Activated CD4-positive, alpha-beta memory T cell treated with anti-CD3 and anti-CD28 coated beads for 36 hours (primary cell): ENCODE measurements at regions of chr6 and their contacts with region 1.

Region 1: DNA sequence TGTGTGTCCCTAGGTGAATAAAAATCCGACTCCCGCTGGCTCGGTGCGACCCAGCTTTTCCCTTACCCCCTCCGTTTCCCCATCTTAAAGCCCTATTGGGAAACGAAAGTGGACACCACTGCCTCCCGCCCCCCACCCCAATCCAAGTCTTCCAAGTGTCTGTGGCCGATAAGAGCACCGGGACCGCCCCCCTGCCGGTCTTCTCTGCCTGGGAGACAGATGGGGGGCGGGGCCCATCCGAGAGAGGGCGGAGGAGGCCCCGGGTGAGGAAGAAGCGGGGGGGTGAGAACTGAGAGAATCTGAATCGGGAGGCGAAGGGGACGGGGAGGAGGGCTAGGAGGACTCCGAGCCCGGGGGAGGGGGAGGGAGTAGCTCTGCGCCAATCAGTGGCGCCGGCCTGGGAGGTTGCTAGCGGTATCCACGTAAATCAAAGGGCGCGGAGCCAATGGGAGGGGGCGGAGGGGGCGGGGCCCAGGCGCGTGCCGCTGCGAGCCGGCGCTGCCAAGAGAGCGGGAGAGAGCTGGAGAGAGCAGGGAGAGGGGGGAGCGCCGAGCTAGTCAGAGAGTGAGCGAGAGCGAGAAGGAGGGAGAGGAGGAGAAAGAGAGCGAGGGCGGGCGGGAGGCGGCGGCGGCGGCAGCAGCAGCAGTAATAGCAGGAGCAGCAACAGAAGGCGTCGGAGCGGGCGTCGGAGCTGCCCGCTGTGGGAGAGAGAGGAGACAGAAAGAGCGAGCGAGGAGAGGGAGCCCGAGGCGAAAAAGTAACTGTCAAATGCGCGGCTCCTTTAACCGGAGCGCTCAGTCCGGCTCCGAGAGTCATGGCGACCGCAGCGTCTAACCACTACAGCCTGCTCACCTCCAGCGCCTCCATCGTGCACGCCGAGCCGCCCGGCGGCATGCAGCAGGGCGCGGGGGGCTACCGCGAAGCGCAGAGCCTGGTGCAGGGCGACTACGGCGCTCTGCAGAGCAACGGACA is at the start of gene POU3F2:
- DNase-seq: peak; percentile 81
- H3K4me3 Mint-ChIP-seq: peak within 1 kb of the TSS; percentile 65
- H3K27ac Mint-ChIP-seq: no peak within 1 kb of the TSS
- H3K4me1 Mint-ChIP-seq: peaks cover 38% of the 10 kb centered on the region
- H3K27me3 Mint-ChIP-seq: peaks cover 68% of the 10 kb centered on the region
- total RNA-seq, gene POU3F2: not detected

Region 2: GRCh38 chr6:97282726-97283617 is 1551.4 kb before region 1 on chr6 and contains the start of gene MMS22L:
- CTCF ChIA-PET with region 1: no interaction called
- POLR2A ChIA-PET with region 1: no interaction called
- intact Hi-C with region 1: loop called (anchors 10 kb)
- DNase-seq: peak; percentile 95
- H3K4me3 Mint-ChIP-seq: peak within 1 kb of the TSS; percentile 91
- H3K27ac Mint-ChIP-seq: peak within 1 kb of the TSS; percentile 69
- H3K4me1 Mint-ChIP-seq: peaks cover 24% of the 10 kb centered on the region
- H3K27me3 Mint-ChIP-seq: no peaks in the 10 kb centered on the region
- total RNA-seq, gene MMS22L: 38.5 to 43.3 TPM

Region 3: DNA sequence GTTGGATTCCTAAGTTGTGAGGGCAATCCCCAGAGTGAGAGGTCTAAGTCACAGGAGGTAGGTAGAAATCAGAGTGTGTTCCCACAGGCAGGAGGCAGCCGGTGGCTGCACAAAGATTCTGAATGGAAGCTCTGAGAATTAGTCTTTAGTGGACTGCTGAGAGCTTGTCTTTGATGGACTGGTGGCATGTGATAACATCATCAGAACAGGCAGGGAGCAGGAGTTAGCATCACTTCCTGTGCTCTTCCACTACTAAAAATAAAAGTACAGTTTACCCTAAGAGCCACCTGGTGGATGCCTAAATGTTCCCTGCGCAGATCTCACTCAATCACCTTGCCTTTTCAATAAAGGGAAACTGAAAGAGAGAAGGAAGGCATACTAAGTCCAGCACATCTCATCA is 294.6 kb before region 1 on chr6:
- CTCF ChIA-PET with region 1: no interaction called
- POLR2A ChIA-PET with region 1: no interaction called
- intact Hi-C with region 1: no loop called
- DNase-seq: no peak
- H3K4me3 Mint-ChIP-seq: no peak overlapping the region
- H3K27ac Mint-ChIP-seq: no peak overlapping the region
- H3K4me1 Mint-ChIP-seq: no peaks in the 10 kb centered on the region
- H3K27me3 Mint-ChIP-seq: no peaks in the 10 kb centered on the region

Region 4: GRCh38 chr6:98777762-98778161 is 56.6 kb before region 1 on chr6:
- CTCF ChIA-PET with region 1: no interaction called
- POLR2A ChIA-PET with region 1: interaction called, 3 read pairs
- intact Hi-C with region 1: loop called (anchors 5 kb)
- DNase-seq: peak; percentile 9
- H3K4me3 Mint-ChIP-seq: no peak overlapping the region
- H3K27ac Mint-ChIP-seq: no peak overlapping the region
- H3K4me1 Mint-ChIP-seq: no peaks in the 10 kb centered on the region
- H3K27me3 Mint-ChIP-seq: peaks cover 19% of the 10 kb centered on the region

Region 5: GRCh38 chr6:98816799-98817198 is 17.5 kb before region 1 on chr6:
- CTCF ChIA-PET with region 1: no interaction called
- POLR2A ChIA-PET with region 1: no interaction called
- intact Hi-C with region 1: no loop called
- DNase-seq: no peak
- H3K4me3 Mint-ChIP-seq: no peak overlapping the region
- H3K27ac Mint-ChIP-seq: no peak overlapping the region
- H3K4me1 Mint-ChIP-seq: no peaks in the 10 kb centered on the region
- H3K27me3 Mint-ChIP-seq: peaks cover 45% of the 10 kb centered on the region

Region 6: GRCh38 chr6:98894810-98895209 is 60.5 kb after region 1 on chr6:
- CTCF ChIA-PET with region 1: no interaction called
- POLR2A ChIA-PET with region 1: no interaction called
- intact Hi-C with region 1: no loop called
- DNase-seq: no peak
- H3K4me3 Mint-ChIP-seq: no peak overlapping the region
- H3K27ac Mint-ChIP-seq: no peak overlapping the region
- H3K4me1 Mint-ChIP-seq: no peaks in the 10 kb centered on the region
- H3K27me3 Mint-ChIP-seq: no peaks in the 10 kb centered on the region

Region 7: GRCh38 chr6:98947351-98948292 is 113.3 kb after region 1 on chr6 and contains the start of gene FBXL4:
- CTCF ChIA-PET with region 1: no interaction called
- POLR2A ChIA-PET with region 1: no interaction called
- intact Hi-C with region 1: loop called (anchors 1 kb)
- DNase-seq: peak; percentile 88
- H3K4me3 Mint-ChIP-seq: peak within 1 kb of the TSS; percentile 93
- H3K27ac Mint-ChIP-seq: peak within 1 kb of the TSS; percentile 93
- H3K4me1 Mint-ChIP-seq: peaks cover 28% of the 10 kb centered on the region
- H3K27me3 Mint-ChIP-seq: no peaks in the 10 kb centered on the region
- total RNA-seq, gene FBXL4: 13.8 TPM

Region 8: DNA sequence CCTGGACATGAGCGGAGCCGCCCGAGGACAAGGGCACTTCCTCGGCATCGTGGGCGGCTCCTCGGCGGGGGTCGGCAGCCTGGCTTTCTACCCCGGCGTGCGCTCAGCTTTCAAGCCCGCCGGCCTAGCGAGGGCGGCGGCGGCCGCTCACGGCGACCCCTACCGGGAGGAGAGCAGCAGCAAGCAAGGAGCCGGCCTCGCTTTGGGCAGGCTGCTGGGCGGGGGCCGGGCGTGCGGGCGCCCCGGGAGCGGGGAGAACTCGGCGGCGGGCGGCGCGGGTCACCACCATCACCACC is 779.0 kb after region 1 on chr6:
- CTCF ChIA-PET with region 1: no interaction called
- POLR2A ChIA-PET with region 1: no interaction called
- intact Hi-C with region 1: loop called (anchors 5 kb)
- DNase-seq: peak; percentile 59
- H3K4me3 Mint-ChIP-seq: no peak overlapping the region
- H3K27ac Mint-ChIP-seq: no peak overlapping the region
- H3K4me1 Mint-ChIP-seq: peaks cover 25% of the 10 kb centered on the region
- H3K27me3 Mint-ChIP-seq: peaks cover 78% of the 10 kb centered on the region